Calu3 (cell line): ENCODE measurements at regions of chr22 and their contacts with region 1.

Region 1: GRCh38 chr22:36329254-36330078 is 58.3 kb downstream of the MYH9 start:
- DNase-seq: peak; percentile 84
- H3K4me3 Mint-ChIP-seq: peak overlapping the region; percentile 68
- H3K27ac Mint-ChIP-seq: peak overlapping the region; percentile 100
- H3K4me1 Mint-ChIP-seq: peaks cover 62% of the 10 kb centered on the region
- H3K27me3 Mint-ChIP-seq: no peaks in the 10 kb centered on the region
- CTCF ChIP-seq: no peak

Region 2: GRCh38 chr22:36211237-36211861 is 118.1 kb before region 1 on chr22:
- CTCF ChIA-PET with region 1: no interaction called
- intact Hi-C with region 1: no loop called
- DNase-seq: no peak
- H3K4me3 Mint-ChIP-seq: no peak overlapping the region
- H3K27ac Mint-ChIP-seq: no peak overlapping the region
- H3K4me1 Mint-ChIP-seq: peaks cover 23% of the 10 kb centered on the region
- H3K27me3 Mint-ChIP-seq: peaks cover 46% of the 10 kb centered on the region
- CTCF ChIP-seq: no peak

Region 3: DNA sequence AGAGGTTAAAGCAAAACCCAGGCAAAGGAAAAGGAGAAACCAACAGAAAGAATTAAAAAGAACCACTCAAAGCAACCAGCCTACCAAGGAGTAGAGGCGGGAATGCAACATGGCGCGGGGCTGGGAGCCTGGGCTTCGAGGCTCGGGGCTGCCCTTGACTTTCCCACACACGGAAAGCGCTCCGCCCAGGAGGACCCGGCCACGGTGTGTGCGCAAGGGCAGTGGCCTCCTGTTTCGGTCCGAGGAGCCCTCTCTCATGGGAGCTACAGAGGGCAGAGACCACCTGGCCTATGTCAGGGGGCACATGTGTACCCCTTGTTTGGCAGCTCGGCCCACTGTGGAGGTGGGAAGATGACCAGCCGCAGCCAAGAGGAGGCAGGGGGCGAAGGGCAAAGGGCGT is 20.6 kb before region 1 on chr22:
- CTCF ChIA-PET with region 1: no interaction called
- intact Hi-C with region 1: no loop called
- DNase-seq: no peak
- H3K4me3 Mint-ChIP-seq: no peak overlapping the region
- H3K27ac Mint-ChIP-seq: no peak overlapping the region
- H3K4me1 Mint-ChIP-seq: peaks cover 5% of the 10 kb centered on the region
- H3K27me3 Mint-ChIP-seq: no peaks in the 10 kb centered on the region
- CTCF ChIP-seq: no peak

Region 4: GRCh38 chr22:36369922-36370791 is 40.7 kb after region 1 on chr22:
- CTCF ChIA-PET with region 1: interaction called, 5 read pairs
- intact Hi-C with region 1: loop called (anchors 2 kb)
- DNase-seq: peak; percentile 77
- H3K4me3 Mint-ChIP-seq: peak overlapping the region; percentile 58
- H3K27ac Mint-ChIP-seq: peak overlapping the region; percentile 80
- H3K4me1 Mint-ChIP-seq: peaks cover 84% of the 10 kb centered on the region
- H3K27me3 Mint-ChIP-seq: no peaks in the 10 kb centered on the region
- CTCF ChIP-seq: no peak

Region 5: GRCh38 chr22:36481393-36482168 is 152.1 kb after region 1 on chr22 and contains the start of gene TXN2:
- CTCF ChIA-PET with region 1: no interaction called
- intact Hi-C with region 1: no loop called
- DNase-seq: peak; percentile 96
- H3K4me3 Mint-ChIP-seq: peak within 1 kb of the TSS; percentile 84
- H3K27ac Mint-ChIP-seq: peak within 1 kb of the TSS; percentile 98
- H3K4me1 Mint-ChIP-seq: peaks cover 21% of the 10 kb centered on the region
- H3K27me3 Mint-ChIP-seq: no peaks in the 10 kb centered on the region
- CTCF ChIP-seq: no peak
- total RNA-seq, gene TXN2: 58.4 and 63.3 TPM in 2 replicates

Region 6: GRCh38 chr22:36512333-36512732 is 182.9 kb after region 1 on chr22:
- CTCF ChIA-PET with region 1: interaction called, 10 read pairs
- intact Hi-C with region 1: no loop called
- DNase-seq: no peak
- H3K4me3 Mint-ChIP-seq: no peak overlapping the region
- H3K27ac Mint-ChIP-seq: no peak overlapping the region
- H3K4me1 Mint-ChIP-seq: peaks cover 5% of the 10 kb centered on the region
- H3K27me3 Mint-ChIP-seq: no peaks in the 10 kb centered on the region
- CTCF ChIP-seq: no peak